ENCODE measurements at regions of chr3 and their contacts with region 1.

Region 1: GRCh38 chr3:13282986-13283876 is 136.9 kb downstream of the NUP210 start:
- DNase-seq: peak in 1 of 2 experiments; percentile 29
- H3K4me3 ChIP-seq: peak overlapping the region; percentile 87
- H3K27ac ChIP-seq: no peak overlapping the region
- H3K4me1 ChIP-seq: peaks cover 10% of the 10 kb centered on the region
- H3K27me3 ChIP-seq: no peaks in the 10 kb centered on the region
- CTCF ChIP-seq: peak; percentile 69

Region 2: GRCh38 chr3:12954891-12955650 is 328.2 kb before region 1 on chr3:
- CTCF ChIA-PET with region 1: interaction called, 13 read pairs
- POLR2A ChIA-PET with region 1: no interaction called
- intact Hi-C with region 1: no loop called
- DNase-seq: peak in 1 of 2 experiments; percentile 79
- H3K4me3 ChIP-seq: no peak overlapping the region
- H3K27ac ChIP-seq: no peak overlapping the region
- H3K4me1 ChIP-seq: no peaks in the 10 kb centered on the region; the same call in 1 of the 2 replicates
- H3K27me3 ChIP-seq: no peaks in the 10 kb centered on the region
- CTCF ChIP-seq: no peak

Region 3: DNA sequence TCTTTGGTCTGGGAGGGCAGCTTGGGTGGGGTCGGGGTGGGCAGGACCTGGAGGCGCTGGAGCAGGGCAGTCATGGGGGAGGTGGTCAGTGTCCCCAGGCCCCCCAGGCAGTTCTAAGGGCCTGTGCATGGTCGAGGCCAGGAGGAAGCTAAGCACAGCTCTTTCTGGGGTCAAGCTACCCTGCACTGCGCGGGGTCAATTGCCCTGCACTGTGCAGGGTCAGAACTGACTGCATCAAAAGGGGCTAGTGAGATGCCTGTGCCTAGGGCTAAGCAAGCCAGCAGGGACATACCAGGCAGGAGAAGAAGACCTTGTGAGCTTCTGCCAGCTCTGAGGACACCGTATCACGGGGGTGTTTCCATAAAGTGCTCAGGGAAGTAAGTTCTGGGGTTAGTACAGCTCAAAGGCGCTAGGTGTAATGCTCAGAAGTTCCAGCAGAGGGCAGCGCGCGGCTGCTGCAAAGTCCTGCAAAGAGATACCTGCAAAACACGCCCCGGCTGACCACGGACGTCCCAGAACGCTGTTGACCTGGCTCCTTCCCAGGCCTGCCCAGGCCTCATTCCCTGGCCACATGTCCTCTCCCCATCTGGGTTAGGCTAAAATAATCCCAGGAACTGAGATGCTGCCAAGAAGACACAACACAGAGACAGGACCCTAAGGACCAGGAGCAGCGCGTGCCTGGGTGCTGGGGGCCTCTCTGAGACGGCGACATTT is 191.2 kb before region 1 on chr3:
- CTCF ChIA-PET with region 1: interaction called, 3 read pairs
- POLR2A ChIA-PET with region 1: no interaction called
- intact Hi-C with region 1: loop called (anchors 1 kb)
- DNase-seq: peak; percentile 69 to 87
- H3K4me3 ChIP-seq: no peak overlapping the region
- H3K27ac ChIP-seq: no peak overlapping the region
- H3K4me1 ChIP-seq: peaks cover 18% of the 10 kb centered on the region
- H3K27me3 ChIP-seq: no peaks in the 10 kb centered on the region
- CTCF ChIP-seq: peak; percentile 98

Region 4: GRCh38 chr3:13110678-13111116 is 172.5 kb before region 1 on chr3:
- CTCF ChIA-PET with region 1: no interaction called
- POLR2A ChIA-PET with region 1: no interaction called
- intact Hi-C with region 1: loop called (anchors 5 kb)
- DNase-seq: peak; percentile 45 to 90
- H3K4me3 ChIP-seq: peak overlapping the region; percentile 31; the same call in 1 of the 2 replicates
- H3K27ac ChIP-seq: peak overlapping the region; percentile 82
- H3K4me1 ChIP-seq: peaks cover 84% of the 10 kb centered on the region
- H3K27me3 ChIP-seq: no peaks in the 10 kb centered on the region
- CTCF ChIP-seq: no peak

Region 5: GRCh38 chr3:13324835-13325501 is 41.7 kb after region 1 on chr3:
- CTCF ChIA-PET with region 1: no interaction called
- POLR2A ChIA-PET with region 1: no interaction called
- intact Hi-C with region 1: no loop called
- DNase-seq: no peak
- H3K4me3 ChIP-seq: no peak overlapping the region
- H3K27ac ChIP-seq: no peak overlapping the region
- H3K4me1 ChIP-seq: no peaks in the 10 kb centered on the region
- H3K27me3 ChIP-seq: no peaks in the 10 kb centered on the region
- CTCF ChIP-seq: no peak

Region 6: GRCh38 chr3:13648060-13649001 is 365.1 kb after region 1 on chr3:
- CTCF ChIA-PET with region 1: no interaction called
- POLR2A ChIA-PET with region 1: no interaction called
- intact Hi-C with region 1: loop called (anchors 10 kb)
- DNase-seq: peak; percentile 54 to 85
- H3K4me3 ChIP-seq: no peak overlapping the region
- H3K27ac ChIP-seq: no peak overlapping the region
- H3K4me1 ChIP-seq: peaks cover 47% of the 10 kb centered on the region
- H3K27me3 ChIP-seq: no peaks in the 10 kb centered on the region
- CTCF ChIP-seq: peak; percentile 99

Region 7: GRCh38 chr3:15241341-15241740 is 1958.1 kb after region 1 on chr3:
- CTCF ChIA-PET with region 1: no interaction called
- POLR2A ChIA-PET with region 1: no interaction called
- intact Hi-C with region 1: no loop called
- DNase-seq: peak in 1 of 2 experiments; percentile 35
- H3K4me3 ChIP-seq: no peak overlapping the region
- H3K27ac ChIP-seq: no peak overlapping the region
- H3K4me1 ChIP-seq: no peaks in the 10 kb centered on the region
- H3K27me3 ChIP-seq: no peaks in the 10 kb centered on the region
- CTCF ChIP-seq: peak; percentile 63

Measured in PC-9 (cell line).